ENCODE measurements at regions of chr22 and their contacts with region 1.

Region 1: DNA sequence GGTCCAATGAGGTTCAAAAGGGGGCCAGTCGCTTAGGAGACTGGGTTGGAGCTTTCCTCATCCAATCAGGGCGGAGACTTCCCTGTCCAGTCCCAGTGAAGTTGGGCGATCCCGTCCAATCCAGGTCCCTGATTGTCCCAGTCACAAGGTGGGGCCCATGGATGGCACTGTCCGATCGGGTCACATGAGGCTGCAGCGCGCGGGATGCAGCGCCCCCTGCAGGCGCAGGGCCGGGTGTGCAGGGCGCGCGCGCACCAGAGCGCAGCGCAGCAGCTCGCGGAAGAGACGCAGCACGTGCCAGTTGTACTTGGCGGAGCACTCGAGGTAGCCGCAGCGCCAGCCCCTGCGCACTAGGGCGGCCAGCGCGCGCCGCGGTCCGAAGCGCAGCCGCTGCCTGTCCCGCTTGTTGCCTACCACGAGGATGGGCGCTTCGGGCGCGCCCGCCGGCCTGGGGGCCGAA is 2.3 kb downstream of the RASL10A start:
- DNase-seq: peak; percentile 81 to 88
- H3K4me3 ChIP-seq: no peak overlapping the region
- H3K27ac ChIP-seq: no peak overlapping the region
- H3K4me1 ChIP-seq: peaks cover 0 to 16% (median 9%) of the 10 kb centered on the region in 4 experiments; a peak in 6 of 7 replicates
- H3K27me3 ChIP-seq: peaks cover 29 to 46% (median 43%) of the 10 kb centered on the region in 4 experiments
- CTCF ChIP-seq: peak; percentile 93 to 99 (median 96)
- EP300 ChIP-seq: no peak
- POLR2A ChIP-seq: no peak
- RAD21 ChIP-seq: peak; percentile 71 to 82

Region 2: DNA sequence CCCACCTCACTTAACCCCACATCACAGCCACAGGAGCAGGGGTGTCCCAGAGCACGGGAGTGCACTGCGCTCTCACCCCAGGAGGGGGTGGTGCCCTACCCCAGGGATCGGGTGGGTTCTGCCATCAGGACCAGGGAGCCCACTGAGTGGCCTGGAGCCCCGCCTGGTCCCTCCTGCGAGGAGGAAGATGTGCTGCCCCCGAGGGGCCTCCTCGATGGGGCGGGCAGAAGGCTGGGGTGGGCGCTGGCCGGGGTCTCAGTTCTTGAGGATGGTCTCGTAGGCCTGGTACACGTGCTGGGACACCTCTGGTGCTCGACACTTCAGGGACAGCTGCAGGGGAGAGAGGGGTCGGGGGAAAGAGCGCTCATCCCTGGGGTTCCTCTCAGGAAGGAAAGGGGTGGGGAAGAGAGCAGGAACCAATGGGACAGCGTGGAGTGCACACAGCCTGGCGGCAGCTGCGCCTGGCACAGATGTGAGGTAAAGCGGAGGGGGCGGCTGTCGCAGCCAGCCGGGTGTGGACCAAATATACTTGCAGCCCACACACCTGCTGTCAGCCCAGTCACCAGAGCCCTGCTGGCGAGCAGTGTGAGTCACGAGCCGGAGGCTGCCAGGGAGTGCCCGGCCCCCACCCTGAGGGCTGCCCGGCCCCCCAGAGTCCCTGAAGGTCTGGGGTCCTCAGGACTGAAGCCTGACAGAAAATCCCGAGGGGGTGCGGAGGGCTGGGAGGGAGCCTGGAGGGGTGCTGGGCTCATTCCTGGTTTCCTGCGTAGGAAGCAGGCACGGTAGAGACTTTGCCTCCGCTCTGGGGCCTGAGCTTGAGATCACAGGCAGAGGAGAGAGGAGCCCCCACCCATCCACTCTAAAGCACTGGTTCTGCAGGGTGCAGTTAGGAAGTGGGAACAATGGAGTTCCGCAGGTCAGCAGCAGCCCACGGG is 15.7 kb after region 1 on chr22:
- CTCF ChIA-PET with region 1: interaction called, 14 read pairs
- POLR2A ChIA-PET with region 1: interaction called, 4 read pairs
- DNase-seq: peak in 1 of 2 experiments; percentile 41
- H3K4me3 ChIP-seq: no peak overlapping the region
- H3K27ac ChIP-seq: no peak overlapping the region
- H3K4me1 ChIP-seq: no peaks in the 10 kb centered on the region; a peak in 1 of 7 replicates
- H3K27me3 ChIP-seq: no peaks in the 10 kb centered on the region
- CTCF ChIP-seq: no peak
- EP300 ChIP-seq: no peak
- POLR2A ChIP-seq: no peak
- RAD21 ChIP-seq: no peak

Measured in H1 (cell line).